ENCODE measurements at regions of chrX and their contacts with region 1.

Region 1: GRCh38 chrX:135931644-135932487 is 38.4 kb downstream of the SAGE1 start:
- DNase-seq: peak; percentile 62
- H3K4me3 Mint-ChIP-seq: no peak overlapping the region
- H3K27ac Mint-ChIP-seq: no peak overlapping the region
- H3K4me1 Mint-ChIP-seq: no peaks in the 10 kb centered on the region
- H3K27me3 Mint-ChIP-seq: peaks cover 43% of the 10 kb centered on the region
- CTCF ChIP-seq: peak; percentile 77

Region 2: GRCh38 chrX:135411893-135412292 is 520.0 kb before region 1 on chrX:
- CTCF ChIA-PET with region 1: no interaction called
- POLR2A ChIA-PET with region 1: no interaction called
- intact Hi-C with region 1: no loop called
- DNase-seq: peak; percentile 20
- H3K4me3 Mint-ChIP-seq: no peak overlapping the region
- H3K27ac Mint-ChIP-seq: no peak overlapping the region
- H3K4me1 Mint-ChIP-seq: no peaks in the 10 kb centered on the region
- H3K27me3 Mint-ChIP-seq: peaks cover 31% of the 10 kb centered on the region
- CTCF ChIP-seq: no peak

Region 3: DNA sequence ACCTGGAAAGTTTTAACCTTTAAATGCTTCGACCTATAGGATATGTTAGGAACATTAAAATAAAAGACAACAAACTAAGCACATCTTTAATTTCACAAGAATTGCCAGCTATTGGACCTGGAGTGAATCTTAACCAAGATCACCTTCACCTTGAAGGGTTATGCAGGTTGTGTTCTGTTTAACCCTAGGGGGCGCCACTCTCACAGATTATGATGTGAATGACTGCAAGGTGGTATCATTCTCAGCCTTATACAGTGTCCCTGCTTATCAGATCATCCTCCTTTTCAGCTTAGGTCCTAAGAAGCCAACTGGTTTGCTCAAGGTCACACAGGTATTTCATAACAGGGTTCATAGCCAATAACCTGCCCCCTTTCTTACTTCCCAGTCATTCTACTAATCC is 387.9 kb before region 1 on chrX:
- CTCF ChIA-PET with region 1: no interaction called
- POLR2A ChIA-PET with region 1: no interaction called
- intact Hi-C with region 1: no loop called
- DNase-seq: peak; percentile 24
- H3K4me3 Mint-ChIP-seq: no peak overlapping the region
- H3K27ac Mint-ChIP-seq: no peak overlapping the region
- H3K4me1 Mint-ChIP-seq: peaks cover 6% of the 10 kb centered on the region
- H3K27me3 Mint-ChIP-seq: peaks cover 69% of the 10 kb centered on the region
- CTCF ChIP-seq: peak; percentile 21

Region 4: DNA sequence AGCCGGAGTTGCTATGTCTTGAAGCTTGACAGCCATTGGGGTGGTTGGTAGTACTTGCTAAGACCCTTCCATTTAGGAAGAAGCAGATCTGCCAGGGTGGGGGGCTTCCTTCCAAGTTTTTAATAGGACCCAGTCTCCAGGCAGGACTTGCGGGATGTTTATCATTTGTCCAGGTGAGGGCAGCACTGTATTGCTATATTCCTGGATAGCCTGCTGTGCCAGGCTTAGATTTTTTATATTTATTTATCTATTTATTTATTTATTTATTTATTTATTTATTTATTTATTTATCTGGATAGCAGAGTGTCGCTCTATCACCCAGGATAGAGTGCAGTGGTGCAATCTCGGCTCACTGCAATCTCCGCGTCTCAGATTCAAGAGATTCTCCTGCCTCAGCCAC is 305.9 kb before region 1 on chrX:
- CTCF ChIA-PET with region 1: interaction called, 26 read pairs
- POLR2A ChIA-PET with region 1: no interaction called
- intact Hi-C with region 1: loop called (anchors 1 kb)
- DNase-seq: peak; percentile 36
- H3K4me3 Mint-ChIP-seq: no peak overlapping the region
- H3K27ac Mint-ChIP-seq: no peak overlapping the region
- H3K4me1 Mint-ChIP-seq: no peaks in the 10 kb centered on the region
- H3K27me3 Mint-ChIP-seq: peaks cover 3% of the 10 kb centered on the region
- CTCF ChIP-seq: peak; percentile 16

Region 5: DNA sequence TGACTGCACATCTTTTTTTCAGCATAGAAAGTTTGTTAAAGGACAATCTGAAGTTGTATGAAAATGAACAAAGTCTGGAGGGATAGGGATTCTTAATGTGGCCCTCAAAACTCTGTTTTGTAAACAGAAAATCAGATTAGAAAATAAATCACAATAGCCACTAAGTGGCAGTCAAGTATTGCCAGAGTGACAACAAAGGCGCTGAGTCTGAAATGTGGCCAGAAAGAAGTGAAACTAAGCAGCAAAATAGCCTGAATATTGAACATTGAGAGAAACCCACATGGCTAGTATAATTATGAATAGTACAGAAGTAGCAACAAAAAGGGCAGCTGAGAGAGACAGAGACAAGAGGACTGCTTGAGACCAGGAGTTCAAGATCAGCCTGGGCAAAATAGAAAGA is 299.5 kb before region 1 on chrX:
- CTCF ChIA-PET with region 1: interaction called, 26 read pairs
- POLR2A ChIA-PET with region 1: no interaction called
- intact Hi-C with region 1: loop called (anchors 2 kb)
- DNase-seq: no peak
- H3K4me3 Mint-ChIP-seq: no peak overlapping the region
- H3K27ac Mint-ChIP-seq: no peak overlapping the region
- H3K4me1 Mint-ChIP-seq: no peaks in the 10 kb centered on the region
- H3K27me3 Mint-ChIP-seq: peaks cover 56% of the 10 kb centered on the region
- CTCF ChIP-seq: no peak

Region 6: DNA sequence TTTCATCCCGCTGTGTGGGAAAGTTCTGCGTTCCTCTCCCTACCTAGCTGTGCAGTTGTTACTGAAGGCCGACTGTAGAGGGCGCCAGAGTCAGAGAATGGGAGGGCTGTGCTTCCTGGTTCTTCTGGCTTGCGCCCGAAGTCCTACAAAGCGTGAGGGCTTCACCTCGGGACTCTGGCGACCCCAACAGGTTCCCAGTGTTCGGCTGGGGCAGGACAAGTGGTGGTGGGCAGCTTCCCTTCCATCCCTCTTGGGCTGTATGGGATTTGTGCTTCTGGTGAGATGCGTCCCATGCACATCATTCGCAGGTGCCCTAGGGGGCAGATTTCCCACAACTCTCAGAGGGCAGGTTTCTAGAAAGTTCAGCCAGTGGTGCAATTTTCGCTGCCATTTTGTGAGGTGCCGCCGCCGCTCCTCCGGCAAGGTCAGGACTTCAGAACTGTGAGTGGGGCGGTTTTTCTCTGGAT is 191.2 kb before region 1 on chrX:
- CTCF ChIA-PET with region 1: interaction called, 21 read pairs
- POLR2A ChIA-PET with region 1: no interaction called
- intact Hi-C with region 1: no loop called
- DNase-seq: peak; percentile 64
- H3K4me3 Mint-ChIP-seq: no peak overlapping the region
- H3K27ac Mint-ChIP-seq: no peak overlapping the region
- H3K4me1 Mint-ChIP-seq: no peaks in the 10 kb centered on the region
- H3K27me3 Mint-ChIP-seq: no peaks in the 10 kb centered on the region
- CTCF ChIP-seq: peak; percentile 39

Region 7: GRCh38 chrX:135973025-135973547 is 41.2 kb after region 1 on chrX:
- CTCF ChIA-PET with region 1: no interaction called
- POLR2A ChIA-PET with region 1: no interaction called
- intact Hi-C with region 1: no loop called
- DNase-seq: peak; percentile 29
- H3K4me3 Mint-ChIP-seq: peak overlapping the region; percentile 98
- H3K27ac Mint-ChIP-seq: peak overlapping the region; percentile 99
- H3K4me1 Mint-ChIP-seq: peaks cover 7% of the 10 kb centered on the region
- H3K27me3 Mint-ChIP-seq: peaks cover 47% of the 10 kb centered on the region
- CTCF ChIP-seq: no peak

Region 8: GRCh38 chrX:136295380-136295779 is 363.5 kb after region 1 on chrX:
- CTCF ChIA-PET with region 1: no interaction called
- POLR2A ChIA-PET with region 1: no interaction called
- intact Hi-C with region 1: no loop called
- DNase-seq: no peak
- H3K4me3 Mint-ChIP-seq: no peak overlapping the region
- H3K27ac Mint-ChIP-seq: no peak overlapping the region
- H3K4me1 Mint-ChIP-seq: no peaks in the 10 kb centered on the region
- H3K27me3 Mint-ChIP-seq: peaks cover 30% of the 10 kb centered on the region
- CTCF ChIP-seq: no peak